ENCODE measurements at regions of chr19 and their contacts with region 1.

Region 1: GRCh38 chr19:43784981-43785808 is 4.4 kb upstream of the KCNN4 start:
- DNase-seq: peak; percentile 87

Region 2: DNA sequence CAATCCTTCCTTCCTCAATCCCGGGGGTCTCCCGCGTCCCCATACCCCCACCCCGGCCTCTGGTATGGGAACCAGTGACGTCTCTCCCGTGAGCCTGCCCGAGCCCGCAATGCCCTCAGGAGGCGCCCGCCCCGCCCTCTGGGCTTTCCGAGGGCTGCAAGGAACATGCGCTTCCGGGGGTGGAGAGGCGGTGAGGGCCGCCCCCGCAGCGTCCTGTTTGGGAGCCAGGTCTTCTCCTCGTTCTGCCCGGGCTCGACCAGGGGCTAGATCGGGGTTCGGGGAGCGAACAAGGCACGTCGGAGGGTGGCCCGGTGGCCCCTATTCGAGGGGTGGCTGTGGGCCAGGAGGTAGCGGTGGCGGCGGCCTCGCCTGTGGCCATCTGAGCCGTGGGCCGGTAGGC is 377.2 kb before region 1 on chr19:
- intact Hi-C with region 1: no loop called
- DNase-seq: no peak

Region 3: DNA sequence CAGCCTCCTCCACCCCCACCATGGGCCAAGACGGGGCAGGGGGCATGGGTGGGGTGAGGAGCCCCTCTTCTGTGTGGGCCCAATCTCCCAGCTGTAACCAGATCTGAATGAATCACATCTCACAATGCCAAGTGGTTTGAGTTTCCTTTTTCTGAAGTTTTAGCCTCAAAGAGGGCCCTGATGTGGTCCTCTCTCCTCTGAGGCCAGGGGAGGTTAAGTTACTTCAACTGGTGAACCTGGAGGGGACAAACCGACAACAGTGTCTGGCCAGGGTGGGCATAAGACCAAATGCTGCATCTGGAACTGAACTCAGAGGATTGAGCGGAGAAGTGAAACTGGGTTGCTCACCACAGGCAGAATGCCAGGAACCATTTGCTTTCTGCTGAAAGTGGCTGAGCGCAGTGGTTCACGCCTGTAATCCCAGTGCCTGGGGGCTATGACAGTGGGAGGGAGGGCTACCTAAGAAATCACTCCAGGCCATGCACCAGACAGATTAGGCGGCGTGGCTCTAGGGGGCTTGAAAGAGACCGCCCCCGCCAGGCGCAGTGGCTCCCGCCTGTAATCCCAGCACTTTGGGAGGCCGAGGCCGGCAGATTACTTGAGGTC is 84.7 kb before region 1 on chr19:
- intact Hi-C with region 1: no loop called
- DNase-seq: peak; percentile 88

Region 4: GRCh38 chr19:43747557-43748204 is 37.5 kb before region 1 on chr19:
- intact Hi-C with region 1: loop called (anchors 2 to 5 kb)
- DNase-seq: no peak

Region 5: GRCh38 chr19:43809762-43810696 is 24.8 kb after region 1 on chr19:
- intact Hi-C with region 1: no loop called
- DNase-seq: no peak